WTC11 (cell line): ENCODE measurements at regions of chr6 and their contacts with region 1.

Region 1: GRCh38 chr6:110039364-110039980 is 61.4 kb downstream of the GPR6 start:
- DNase-seq: peak; percentile 89
- ATAC-seq: peak; percentile 80
- H3K4me3 Mint-ChIP-seq: peak overlapping the region; percentile 71
- H3K27ac Mint-ChIP-seq: peak overlapping the region; percentile 91
- H3K4me1 Mint-ChIP-seq: peaks cover 23% of the 10 kb centered on the region
- H3K27me3 Mint-ChIP-seq: no peaks in the 10 kb centered on the region
- CTCF ChIP-seq: peak; percentile 92

Region 2: GRCh38 chr6:109595998-109596397 is 443.5 kb before region 1 on chr6:
- CTCF ChIA-PET with region 1: interaction called, 20 read pairs
- POLR2A ChIA-PET with region 1: no interaction called
- DNase-seq: peak; percentile 20
- ATAC-seq: peak; percentile 83
- H3K4me3 Mint-ChIP-seq: no peak overlapping the region
- H3K27ac Mint-ChIP-seq: no peak overlapping the region
- H3K4me1 Mint-ChIP-seq: no peaks in the 10 kb centered on the region
- H3K27me3 Mint-ChIP-seq: peaks cover under 1% of the 10 kb centered on the region
- CTCF ChIP-seq: peak; percentile 31

Region 3: DNA sequence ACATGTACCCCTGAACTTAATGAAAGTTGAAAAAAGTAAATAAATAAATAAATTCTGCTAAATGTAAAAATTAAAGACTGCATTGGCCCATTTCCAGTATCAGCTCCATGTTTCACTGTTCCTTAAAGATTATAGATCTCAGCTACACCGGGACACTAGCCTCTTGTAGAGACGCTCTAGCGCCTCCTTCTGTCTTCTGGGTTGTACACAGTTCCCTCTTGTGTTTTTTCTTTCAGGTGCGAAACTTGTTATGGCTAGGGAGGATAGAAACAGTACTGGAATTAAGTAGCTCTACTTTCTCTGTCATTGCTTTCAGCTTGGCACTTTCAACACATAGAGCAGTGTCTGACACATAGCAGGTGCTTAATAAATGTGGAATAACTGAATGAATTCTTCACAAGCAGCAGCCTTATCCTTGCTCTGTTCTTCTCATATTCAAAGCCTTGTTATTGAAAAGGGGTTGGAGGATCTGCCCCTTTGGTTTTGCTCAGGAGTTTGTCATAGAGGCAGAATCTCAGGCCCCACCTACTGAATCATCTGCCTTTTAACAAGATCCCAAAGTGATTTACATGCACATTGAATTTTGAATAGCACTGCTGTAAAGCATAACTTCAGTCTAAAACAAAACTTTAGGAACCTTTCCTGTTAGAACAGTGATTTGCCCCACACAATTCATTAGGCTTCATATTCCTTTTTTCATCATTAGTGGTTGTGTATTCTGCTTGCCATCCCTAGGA is 256.1 kb before region 1 on chr6:
- CTCF ChIA-PET with region 1: interaction called, 97 read pairs
- POLR2A ChIA-PET with region 1: interaction called, 3 read pairs
- DNase-seq: peak; percentile 51
- ATAC-seq: peak; percentile 95
- H3K4me3 Mint-ChIP-seq: no peak overlapping the region
- H3K27ac Mint-ChIP-seq: peak overlapping the region; percentile 8; the same call in 1 of the 2 replicates
- H3K4me1 Mint-ChIP-seq: peaks cover 5% of the 10 kb centered on the region; the same call in 1 of the 2 replicates
- H3K27me3 Mint-ChIP-seq: no peaks in the 10 kb centered on the region
- CTCF ChIP-seq: peak; percentile 39; the same call in 1 of the 2 replicates

Region 4: DNA sequence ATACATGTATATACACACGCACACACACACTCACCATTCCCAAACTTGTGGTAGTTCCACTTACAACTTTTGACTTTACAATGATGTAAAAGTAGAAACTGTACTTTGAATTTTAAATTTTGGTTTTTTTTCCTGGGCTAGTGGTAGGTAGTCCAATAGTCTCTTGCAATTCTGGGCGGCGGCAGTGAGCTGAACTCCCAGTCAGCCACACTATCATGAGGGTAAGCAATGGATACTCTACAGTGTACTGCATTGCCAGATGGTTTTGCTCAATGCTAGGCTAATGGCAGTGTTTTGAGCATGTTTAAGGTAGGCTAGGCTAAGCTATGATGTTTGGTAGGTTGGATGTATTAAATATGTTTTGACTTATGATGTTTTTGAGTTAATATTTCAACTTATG is 197.6 kb before region 1 on chr6:
- CTCF ChIA-PET with region 1: interaction called, 10 read pairs
- POLR2A ChIA-PET with region 1: no interaction called
- DNase-seq: no peak
- ATAC-seq: no peak
- H3K4me3 Mint-ChIP-seq: no peak overlapping the region
- H3K27ac Mint-ChIP-seq: no peak overlapping the region
- H3K4me1 Mint-ChIP-seq: peaks cover 2% of the 10 kb centered on the region; the same call in 1 of the 2 replicates
- H3K27me3 Mint-ChIP-seq: no peaks in the 10 kb centered on the region
- CTCF ChIP-seq: no peak

Region 5: DNA sequence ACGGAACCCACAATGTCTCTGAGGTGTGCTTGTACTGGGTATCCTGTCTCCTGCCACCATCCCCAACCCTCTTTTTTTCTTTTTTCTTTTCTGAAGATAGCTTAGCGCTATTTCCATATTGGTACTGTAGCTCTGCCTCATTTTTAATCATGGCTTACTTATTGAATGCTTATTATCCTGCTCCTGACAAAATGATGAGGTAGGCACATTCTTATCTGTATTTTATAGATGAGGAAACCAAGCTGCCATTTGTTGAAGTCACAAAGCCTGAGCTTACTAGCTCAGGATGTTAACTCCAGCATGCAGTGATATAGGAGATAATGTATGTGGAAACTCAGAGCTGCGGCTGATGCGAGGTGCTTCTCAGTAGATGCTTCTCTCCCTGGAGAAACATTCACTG is 122.7 kb before region 1 on chr6:
- CTCF ChIA-PET with region 1: no interaction called
- POLR2A ChIA-PET with region 1: no interaction called
- DNase-seq: no peak
- ATAC-seq: no peak
- H3K4me3 Mint-ChIP-seq: no peak overlapping the region
- H3K27ac Mint-ChIP-seq: no peak overlapping the region
- H3K4me1 Mint-ChIP-seq: peaks cover 12% of the 10 kb centered on the region
- H3K27me3 Mint-ChIP-seq: no peaks in the 10 kb centered on the region; the same call in 1 of the 2 replicates
- CTCF ChIP-seq: no peak

Region 6: DNA sequence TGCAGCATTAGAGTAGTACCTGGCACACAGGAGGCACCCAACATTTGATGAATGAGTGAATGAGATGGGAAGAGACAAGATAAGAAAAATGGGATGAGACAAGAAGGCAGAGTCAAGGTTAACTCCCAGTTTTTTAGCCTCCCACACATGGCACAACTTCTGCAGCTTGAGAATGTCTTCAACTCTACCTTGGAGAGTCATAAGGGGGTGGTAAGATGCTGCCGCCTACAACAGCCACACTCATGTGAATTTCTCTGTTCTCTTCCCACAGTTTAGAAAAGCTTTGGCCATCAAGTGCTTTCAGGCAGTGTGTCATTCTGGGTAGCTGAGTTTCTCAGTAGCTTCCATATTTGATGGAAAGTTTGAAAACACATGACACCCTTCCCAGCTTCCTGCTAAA is 80.8 kb before region 1 on chr6:
- CTCF ChIA-PET with region 1: interaction called, 10 read pairs
- POLR2A ChIA-PET with region 1: no interaction called
- DNase-seq: no peak
- ATAC-seq: no peak
- H3K4me3 Mint-ChIP-seq: no peak overlapping the region
- H3K27ac Mint-ChIP-seq: no peak overlapping the region
- H3K4me1 Mint-ChIP-seq: peaks cover 4% of the 10 kb centered on the region; the same call in 1 of the 2 replicates
- H3K27me3 Mint-ChIP-seq: peaks cover 3% of the 10 kb centered on the region; the same call in 1 of the 2 replicates
- CTCF ChIP-seq: no peak

Region 7: DNA sequence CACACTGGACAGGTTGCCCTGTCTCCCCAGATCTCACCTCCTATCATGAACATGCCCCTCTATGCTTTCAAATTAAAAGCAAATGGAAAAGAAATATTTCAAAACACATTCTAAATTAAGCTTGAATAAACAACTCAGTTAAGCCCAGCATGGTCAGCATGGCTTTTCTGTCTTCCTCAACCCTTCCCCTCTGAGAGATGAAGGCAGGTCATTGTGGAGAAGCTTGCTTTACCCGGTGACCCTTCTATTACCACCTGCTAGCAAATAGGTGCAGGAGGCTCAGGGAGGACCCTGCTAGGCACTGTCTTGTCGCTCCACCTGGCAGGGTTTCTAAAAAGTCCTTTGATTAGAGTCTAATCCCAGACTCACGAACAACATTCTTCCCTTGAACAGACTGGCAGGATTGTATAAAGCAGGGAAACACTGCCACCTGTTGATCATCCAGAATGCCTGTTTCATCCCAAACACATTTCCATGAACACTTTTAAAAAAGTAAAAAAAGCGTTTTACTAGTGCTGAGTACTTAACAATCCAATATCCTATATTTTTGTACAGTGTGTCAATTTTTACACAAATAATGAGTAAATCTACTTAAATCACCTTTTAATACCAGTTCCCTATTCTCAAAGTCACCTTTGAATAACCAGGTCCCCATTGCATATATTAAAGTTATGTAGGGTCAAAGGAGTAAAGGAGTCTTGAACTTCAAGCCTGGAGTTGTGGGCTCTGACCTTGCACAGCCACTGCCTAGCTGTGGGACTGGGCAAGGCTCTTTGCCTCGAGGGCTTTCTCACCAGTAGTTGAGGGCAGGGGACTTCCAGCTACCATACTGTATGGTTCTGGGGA is 14.1 kb after region 1 on chr6:
- CTCF ChIA-PET with region 1: interaction called, 29 read pairs
- POLR2A ChIA-PET with region 1: interaction called, 4 read pairs
- DNase-seq: no peak
- ATAC-seq: peak; percentile 72
- H3K4me3 Mint-ChIP-seq: no peak overlapping the region
- H3K27ac Mint-ChIP-seq: no peak overlapping the region
- H3K4me1 Mint-ChIP-seq: peaks cover 17% of the 10 kb centered on the region
- H3K27me3 Mint-ChIP-seq: no peaks in the 10 kb centered on the region
- CTCF ChIP-seq: peak; percentile 32; the same call in 1 of the 2 replicates